GM12878 (cell line): ENCODE measurements at regions of chr2 and their contacts with region 1.

Region 1: GRCh38 chr2:181123798-181124231 is 143.4 kb downstream of the UBE2E3 start:
- DNase-seq: peak; percentile 53
- ATAC-seq: peak; percentile 94
- H3K4me3 ChIP-seq: peak overlapping the region; percentile 53; the same call in 1 of the 2 replicates
- H3K27ac ChIP-seq: peak overlapping the region; percentile 81
- H3K4me1 ChIP-seq: peaks cover 14% of the 10 kb centered on the region
- H3K27me3 ChIP-seq: no peaks in the 10 kb centered on the region; a peak in 1 of 4 replicates
- CTCF ChIP-seq: no peak
- EP300 ChIP-seq: peak; percentile 77 to 86; a peak in 3 of 4 replicates
- POLR2A ChIP-seq: no peak
- RAD21 ChIP-seq: 0 out of 2 replicates have a peak, but pooled peaks have one; percentile 10

Region 2: DNA sequence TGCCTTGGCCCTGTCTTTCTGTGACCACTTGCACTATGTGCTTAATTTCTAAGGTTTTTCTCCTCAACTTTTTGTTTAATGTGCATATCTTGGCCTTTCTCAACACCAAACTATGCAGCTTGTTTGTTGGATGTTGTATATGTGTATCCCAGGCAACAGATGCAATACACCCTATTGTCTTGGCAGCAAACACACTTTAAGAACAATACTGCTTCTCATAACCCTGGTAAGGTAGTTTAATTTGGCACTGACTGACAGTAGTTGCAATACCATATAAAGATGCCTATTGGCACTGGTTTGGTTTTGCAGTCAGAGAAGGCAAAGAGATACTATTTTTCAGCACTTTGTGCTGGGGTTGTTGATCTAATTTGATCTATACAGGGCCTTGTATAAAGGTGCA is 756.0 kb before region 1 on chr2:
- CTCF ChIA-PET with region 1: no interaction called
- POLR2A ChIA-PET with region 1: no interaction called
- RAD21 ChIA-PET with region 1: no interaction called
- SMC1A ChIA-PET with region 1: no interaction called
- in situ Hi-C with region 1: no loop called
- intact Hi-C with region 1: no loop called
- DNase-seq: no peak
- ATAC-seq: no peak
- H3K4me3 ChIP-seq: no peak overlapping the region
- H3K27ac ChIP-seq: no peak overlapping the region
- H3K4me1 ChIP-seq: no peaks in the 10 kb centered on the region
- H3K27me3 ChIP-seq: no peaks in the 10 kb centered on the region
- CTCF ChIP-seq: no peak
- EP300 ChIP-seq: no peak
- POLR2A ChIP-seq: no peak
- RAD21 ChIP-seq: no peak

Region 3: DNA sequence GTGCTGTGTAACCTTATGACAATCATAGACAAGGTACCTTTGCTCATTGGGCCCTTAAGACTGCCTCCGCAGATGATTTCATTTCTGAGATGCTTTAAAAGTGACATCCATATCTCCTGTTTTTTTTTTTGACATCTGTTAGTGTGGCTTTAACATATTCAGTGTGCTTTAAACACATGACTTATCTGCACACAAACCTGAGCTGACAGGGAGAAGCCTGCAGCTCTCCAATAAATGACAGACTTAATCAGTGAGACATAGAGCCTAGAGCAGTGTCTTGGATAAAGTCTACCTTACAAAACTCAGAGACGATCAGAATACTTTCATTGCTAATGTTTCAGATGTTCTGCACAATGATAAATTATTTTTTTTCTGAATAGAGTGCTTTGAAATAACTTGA is 12.8 kb before region 1 on chr2:
- CTCF ChIA-PET with region 1: interaction called, 11 read pairs
- POLR2A ChIA-PET with region 1: interaction called, 5 read pairs
- RAD21 ChIA-PET with region 1: interaction called, 12 read pairs
- SMC1A ChIA-PET with region 1: interaction called, 30 read pairs
- in situ Hi-C with region 1: no loop called
- intact Hi-C with region 1: loop called (anchors 1 kb)
- DNase-seq: no peak
- ATAC-seq: no peak
- H3K4me3 ChIP-seq: no peak overlapping the region
- H3K27ac ChIP-seq: no peak overlapping the region
- H3K4me1 ChIP-seq: peaks cover 21% of the 10 kb centered on the region
- H3K27me3 ChIP-seq: no peaks in the 10 kb centered on the region
- CTCF ChIP-seq: no peak
- EP300 ChIP-seq: no peak
- POLR2A ChIP-seq: no peak
- RAD21 ChIP-seq: no peak

Region 4: DNA sequence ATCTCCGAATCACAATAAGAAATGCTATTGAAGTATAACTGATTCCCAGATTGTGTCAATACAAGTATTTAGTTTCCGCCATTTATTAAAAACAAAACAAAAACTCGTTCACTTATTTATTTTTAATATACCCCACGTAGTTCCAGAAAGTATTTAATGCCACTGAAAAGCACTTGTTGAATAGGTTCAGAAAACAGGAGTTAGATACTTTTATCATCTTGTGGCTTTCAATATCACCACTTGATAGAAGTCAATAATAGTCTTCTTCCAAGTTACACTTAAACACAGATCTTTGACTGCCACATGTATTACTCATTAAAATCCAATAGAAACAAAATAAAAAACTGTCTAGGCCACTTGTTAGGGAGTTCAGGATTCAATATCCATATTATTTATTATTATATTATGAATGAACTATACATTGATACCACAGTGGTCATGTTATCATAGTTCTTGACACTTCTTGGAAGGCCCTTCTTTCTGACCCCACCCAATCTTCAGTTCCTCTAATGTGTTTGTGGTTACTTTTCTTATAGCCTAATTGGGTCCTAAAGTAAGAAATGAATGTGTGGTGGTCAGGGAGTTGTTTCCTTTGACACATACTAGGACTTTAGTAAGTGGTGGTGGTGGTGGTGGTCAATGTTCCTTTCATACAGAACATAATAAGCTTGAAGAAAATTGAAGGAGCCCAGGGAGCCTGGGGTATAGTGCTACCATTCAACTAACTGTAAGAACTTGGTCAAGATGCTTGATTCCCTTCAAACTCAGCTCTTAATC is 112.1 kb after region 1 on chr2:
- CTCF ChIA-PET with region 1: no interaction called
- POLR2A ChIA-PET with region 1: no interaction called
- RAD21 ChIA-PET with region 1: no interaction called
- SMC1A ChIA-PET with region 1: no interaction called
- in situ Hi-C with region 1: no loop called
- intact Hi-C with region 1: loop called (anchors 5 kb)
- DNase-seq: peak; percentile 82
- ATAC-seq: peak; percentile 92
- H3K4me3 ChIP-seq: no peak overlapping the region
- H3K27ac ChIP-seq: no peak overlapping the region
- H3K4me1 ChIP-seq: peaks cover 18% of the 10 kb centered on the region
- H3K27me3 ChIP-seq: no peaks in the 10 kb centered on the region; a peak in 1 of 4 replicates
- CTCF ChIP-seq: no peak
- EP300 ChIP-seq: peak; percentile 84 to 91; a peak in 3 of 4 replicates
- POLR2A ChIP-seq: no peak
- RAD21 ChIP-seq: peak; percentile 32; the same call in 1 of the 2 replicates